WTC11 (cell line): ENCODE measurements at regions of chr9 and their contacts with region 1.

Region 1: DNA sequence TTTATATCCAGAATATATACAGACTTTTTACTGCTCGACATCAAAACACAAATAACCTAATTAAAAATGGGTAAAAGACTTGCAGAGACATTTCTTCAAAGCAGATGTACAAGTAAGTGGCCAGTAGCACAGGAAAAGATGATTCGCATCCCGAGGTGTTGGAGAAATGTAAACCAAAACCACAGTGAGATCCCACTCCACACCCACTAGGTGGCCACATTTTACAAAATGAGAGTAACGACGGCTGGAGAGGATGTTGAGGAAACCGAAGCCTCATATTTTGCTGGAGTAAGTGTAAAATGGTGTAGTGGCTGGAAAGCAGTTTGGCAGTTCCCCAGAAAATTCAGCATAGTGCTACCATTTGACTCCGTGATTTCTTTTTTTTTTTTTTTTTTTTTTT is 21.2 kb upstream of the GBGT1 start:
- DNase-seq: no peak
- ATAC-seq: no peak
- H3K4me3 Mint-ChIP-seq: no peak overlapping the region
- H3K27ac Mint-ChIP-seq: no peak overlapping the region
- H3K4me1 Mint-ChIP-seq: no peaks in the 10 kb centered on the region
- H3K27me3 Mint-ChIP-seq: peaks cover 38% of the 10 kb centered on the region
- CTCF ChIP-seq: no peak

Region 2: DNA sequence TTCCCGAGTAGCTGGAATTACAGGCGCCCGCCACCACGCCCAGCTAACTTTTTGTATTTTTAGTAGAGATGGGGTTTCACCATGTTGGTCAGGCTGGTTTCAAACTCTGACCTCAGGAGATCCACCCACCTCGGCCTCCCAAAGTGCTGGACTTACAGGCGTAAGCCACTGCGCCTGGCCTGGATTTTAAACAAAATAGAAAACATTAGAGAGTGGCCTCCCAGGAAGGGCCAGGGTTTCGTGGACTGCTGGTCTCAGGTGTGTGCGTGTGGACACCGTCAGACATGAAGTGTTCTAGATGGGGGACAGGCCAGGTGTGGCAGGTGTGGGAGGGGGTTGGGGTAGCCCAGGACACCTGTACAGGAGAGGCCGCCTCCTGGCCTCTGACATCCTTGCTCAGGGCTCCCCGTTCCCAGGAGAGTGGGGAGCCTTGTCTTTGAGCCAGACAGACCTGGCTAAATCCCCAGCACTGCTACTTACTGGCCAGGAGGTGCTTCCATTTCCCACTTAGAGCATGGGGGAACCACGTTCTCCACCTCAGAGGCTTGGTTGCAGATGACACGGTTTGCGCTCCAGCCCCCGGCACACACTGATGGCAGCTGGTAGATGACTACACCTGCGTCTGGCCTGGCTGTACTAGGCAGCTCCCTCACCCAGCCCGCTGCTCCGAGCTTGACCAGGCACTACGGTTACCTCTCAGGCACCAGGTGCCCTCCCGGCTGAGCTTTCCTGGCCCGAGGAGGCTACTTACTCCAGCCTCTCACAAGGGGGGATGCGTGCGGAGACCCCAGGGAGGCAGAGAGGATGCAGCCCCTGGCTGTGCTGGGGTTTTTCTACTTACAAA is 14.0 kb before region 1 on chr9:
- CTCF ChIA-PET with region 1: interaction called, 24 read pairs
- POLR2A ChIA-PET with region 1: no interaction called
- DNase-seq: no peak
- ATAC-seq: no peak
- H3K4me3 Mint-ChIP-seq: no peak overlapping the region
- H3K27ac Mint-ChIP-seq: no peak overlapping the region
- H3K4me1 Mint-ChIP-seq: peaks cover 4% of the 10 kb centered on the region
- H3K27me3 Mint-ChIP-seq: peaks cover 18% of the 10 kb centered on the region
- CTCF ChIP-seq: no peak

Region 3: GRCh38 chr9:133225171-133226011 is 40.4 kb after region 1 on chr9:
- CTCF ChIA-PET with region 1: interaction called, 27 read pairs
- POLR2A ChIA-PET with region 1: no interaction called
- DNase-seq: no peak
- ATAC-seq: no peak
- H3K4me3 Mint-ChIP-seq: no peak overlapping the region
- H3K27ac Mint-ChIP-seq: no peak overlapping the region
- H3K4me1 Mint-ChIP-seq: peaks cover 6% of the 10 kb centered on the region; the same call in 1 of the 2 replicates
- H3K27me3 Mint-ChIP-seq: peaks cover 27% of the 10 kb centered on the region
- CTCF ChIP-seq: no peak

Region 4: GRCh38 chr9:133306242-133307204 is 121.6 kb after region 1 on chr9:
- CTCF ChIA-PET with region 1: interaction called, 15 read pairs
- POLR2A ChIA-PET with region 1: no interaction called
- DNase-seq: no peak
- ATAC-seq: no peak
- H3K4me3 Mint-ChIP-seq: no peak overlapping the region
- H3K27ac Mint-ChIP-seq: no peak overlapping the region
- H3K4me1 Mint-ChIP-seq: no peaks in the 10 kb centered on the region
- H3K27me3 Mint-ChIP-seq: peaks cover 15% of the 10 kb centered on the region
- CTCF ChIP-seq: no peak

Region 5: DNA sequence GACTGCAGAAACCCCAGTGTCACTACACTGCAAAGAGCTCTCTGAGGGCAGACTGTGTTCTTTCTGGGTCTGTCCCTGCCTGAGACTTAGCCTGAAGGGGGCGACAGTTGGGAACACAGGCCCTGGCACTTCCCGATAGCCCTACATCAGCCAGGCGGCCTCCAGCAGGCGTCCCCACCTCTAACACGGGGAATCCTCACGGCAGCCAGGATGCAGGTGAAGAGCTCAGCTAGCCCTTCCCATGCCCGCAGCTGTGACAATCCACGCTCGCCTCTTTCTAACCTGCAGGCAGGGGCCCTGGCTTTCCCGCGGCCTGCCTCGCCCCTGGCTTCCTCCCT is 157.1 kb after region 1 on chr9:
- CTCF ChIA-PET with region 1: interaction called, 52 read pairs
- POLR2A ChIA-PET with region 1: no interaction called
- DNase-seq: peak; percentile 75
- ATAC-seq: peak; percentile 84
- H3K4me3 Mint-ChIP-seq: no peak overlapping the region
- H3K27ac Mint-ChIP-seq: peak overlapping the region; percentile 58
- H3K4me1 Mint-ChIP-seq: peaks cover 13% of the 10 kb centered on the region
- H3K27me3 Mint-ChIP-seq: no peaks in the 10 kb centered on the region
- CTCF ChIP-seq: no peak